ENCODE measurements at regions of chr10 and their contacts with region 1.

Region 1: GRCh38 chr10:102064868-102065560 is at the start of gene HPS6:
- DNase-seq: peak; percentile 90
- H3K4me3 ChIP-seq: peak within 1 kb of the TSS; percentile 67 to 97
- H3K27ac ChIP-seq: peak within 1 kb of the TSS; percentile 78 to 91
- H3K4me1 ChIP-seq: peaks cover 6% of the 10 kb centered on the region
- H3K27me3 ChIP-seq: no peaks in the 10 kb centered on the region
- CTCF ChIP-seq: peak in 2 of 4 experiments; percentile 36 to 38
- POLR2A ChIP-seq: peak; percentile 81
- total RNA-seq, gene HPS6: 26.1 to 35.9 TPM

Region 2: GRCh38 chr10:101710059-101710695 is 354.8 kb before region 1 on chr10:
- intact Hi-C with region 1: no loop called
- DNase-seq: no peak
- H3K4me3 ChIP-seq: no peak overlapping the region
- H3K27ac ChIP-seq: no peak overlapping the region
- H3K4me1 ChIP-seq: no peaks in the 10 kb centered on the region
- H3K27me3 ChIP-seq: no peaks in the 10 kb centered on the region
- CTCF ChIP-seq: no peak
- POLR2A ChIP-seq: no peak

Region 3: DNA sequence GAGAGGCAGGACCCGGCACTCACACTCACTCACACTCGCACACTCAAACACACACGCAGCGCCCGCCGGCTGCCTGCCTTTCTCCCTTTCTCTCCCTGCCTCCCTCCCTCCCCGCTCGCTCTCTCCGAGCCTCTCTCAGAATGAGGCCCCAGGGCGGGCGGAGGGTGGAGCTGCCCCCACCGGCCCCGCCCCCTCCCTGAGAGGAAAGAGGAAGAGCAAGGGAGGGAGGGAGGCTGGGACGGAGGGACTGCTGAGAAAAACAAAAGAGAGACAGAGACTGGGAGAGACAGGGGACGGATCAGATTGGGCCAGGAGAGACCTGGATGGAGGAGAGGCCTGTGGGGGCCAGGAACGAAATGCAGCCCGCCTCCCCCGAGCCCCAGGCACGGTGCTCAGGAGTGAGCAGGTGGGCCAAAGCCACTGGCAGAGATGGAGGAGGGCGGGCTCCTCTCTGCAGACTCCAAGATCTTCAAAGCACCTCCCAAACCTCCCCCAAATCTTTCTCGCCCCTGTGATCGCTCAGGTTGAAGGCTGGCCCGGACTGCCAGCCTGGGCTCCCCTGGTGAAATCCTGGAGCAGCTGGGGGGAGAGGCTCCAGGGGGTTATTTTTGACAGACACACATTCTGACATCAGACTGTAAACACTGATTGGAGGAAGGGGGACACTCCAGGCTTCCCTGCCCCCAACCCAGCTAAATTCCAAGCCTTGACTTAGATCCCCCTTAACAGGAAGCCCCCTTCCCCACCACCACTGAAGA is 50.0 kb after region 1 on chr10:
- intact Hi-C with region 1: loop called (anchors 5 kb)
- DNase-seq: peak; percentile 91
- H3K4me3 ChIP-seq: peak overlapping the region; percentile 72 to 79
- H3K27ac ChIP-seq: peak overlapping the region; percentile 89 to 92
- H3K4me1 ChIP-seq: peaks cover 40% of the 10 kb centered on the region
- H3K27me3 ChIP-seq: no peaks in the 10 kb centered on the region
- CTCF ChIP-seq: peak in 1 of 4 experiments; percentile 2
- POLR2A ChIP-seq: peak; percentile 93